Heart right ventricle (tissue), 16 donors: ENCODE measurements at regions of chr10 and their contacts with region 1.

Region 1: GRCh38 chr10:3887885-3888476 is 103.0 kb upstream of the KLF6 start:
- DNase-seq: peak in 1 of 2 donors; percentile 42
- ATAC-seq: peak in 6 of 8 donors; percentile 30 to 50 (median 45)
- H3K4me3 ChIP-seq: no peak overlapping the region
- H3K27ac ChIP-seq: peak overlapping the region in 8 of 10 donors; percentile 62 to 86 (median 78)
- H3K4me1 ChIP-seq: peaks cover 0 to 40% (median 25%) of the 10 kb centered on the region in 9 donors
- H3K27me3 ChIP-seq: no peaks in the 10 kb centered on the region
- CTCF ChIP-seq: no peak

Region 2: GRCh38 chr10:3811291-3811870 is 76.6 kb before region 1 on chr10:
- intact Hi-C with region 1: loop called in 1 of 10 experiments (anchors 5 kb)
- DNase-seq: peak in 1 of 2 donors; percentile 54
- ATAC-seq: peak; percentile 20 to 71 (median 66)
- H3K4me3 ChIP-seq: peak overlapping the region in 6 of 10 donors; percentile 4 to 30 (median 22)
- H3K27ac ChIP-seq: peak overlapping the region; percentile 49 to 95 (median 89)
- H3K4me1 ChIP-seq: peaks cover 19 to 75% (median 57%) of the 10 kb centered on the region in 9 donors
- H3K27me3 ChIP-seq: no peaks in the 10 kb centered on the region
- CTCF ChIP-seq: no peak

Region 3: GRCh38 chr10:4867520-4868356 is 979.8 kb after region 1 on chr10:
- intact Hi-C with region 1: no loop called
- DNase-seq: no peak
- ATAC-seq: peak; percentile 85 to 93 (median 91)
- H3K4me3 ChIP-seq: no peak overlapping the region
- H3K27ac ChIP-seq: peak overlapping the region in 9 of 10 donors; percentile 5 to 62 (median 44)
- H3K4me1 ChIP-seq: peaks cover 0 to 15% (median 0%) of the 10 kb centered on the region in 9 donors
- H3K27me3 ChIP-seq: no peaks in the 10 kb centered on the region
- CTCF ChIP-seq: no peak